ENCODE measurements at regions of chr5 and their contacts with region 1.

Region 1: DNA sequence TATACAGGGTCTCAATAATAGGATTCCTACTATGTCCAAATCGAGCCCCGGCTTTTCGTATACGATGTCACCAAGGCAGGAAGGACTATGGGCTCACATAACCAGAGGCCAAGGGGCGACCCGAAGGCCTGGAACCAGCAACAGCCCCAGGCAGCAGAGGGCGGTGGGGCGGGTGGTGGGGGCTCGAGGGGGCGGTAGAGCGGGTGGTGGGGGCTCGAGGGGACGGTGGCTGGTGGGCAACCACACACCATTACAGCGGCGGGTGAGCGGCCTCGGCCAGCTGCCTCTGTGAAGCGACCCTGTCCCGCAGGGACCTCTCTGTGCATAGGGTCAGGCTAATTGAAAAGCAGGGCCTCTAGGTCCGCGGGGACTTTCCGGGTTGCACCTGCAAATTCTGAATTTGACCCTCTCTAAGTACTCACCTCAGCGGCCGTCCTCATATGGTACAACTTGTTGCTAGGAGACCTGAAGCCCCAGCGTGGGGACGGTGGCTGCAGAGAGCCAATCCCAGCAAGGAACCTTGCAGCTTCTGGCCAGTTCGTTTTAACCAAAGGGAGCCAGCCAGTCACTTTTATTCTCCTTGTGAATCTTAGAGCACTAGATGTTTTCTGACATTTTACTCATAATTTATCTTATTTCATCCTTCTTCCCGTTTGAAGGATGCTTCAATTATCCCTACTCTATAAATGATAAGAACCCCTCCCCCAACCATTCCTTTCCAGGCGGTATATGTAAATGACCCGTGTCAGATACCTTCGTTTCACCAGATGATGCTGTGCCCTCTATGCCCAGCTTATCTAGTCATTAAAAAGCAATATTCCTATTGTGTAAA is at the start of gene NME5:
- DNase-seq: peak; percentile 72 to 91 (median 76)
- ATAC-seq: peak; percentile 98 to 100 (median 99)
- H3K4me3 ChIP-seq: peak within 1 kb of the TSS; percentile 48 to 67 (median 57)
- H3K27ac ChIP-seq: no peak within 1 kb of the TSS
- H3K4me1 ChIP-seq: peaks cover 0 to 7% (median 0%) of the 10 kb centered on the region in 3 donors
- H3K27me3 ChIP-seq: no peaks in the 10 kb centered on the region
- CTCF ChIP-seq: no peak
- total RNA-seq, gene NME5: 1.8 to 4.3 (median 2.5) TPM

Region 2: DNA sequence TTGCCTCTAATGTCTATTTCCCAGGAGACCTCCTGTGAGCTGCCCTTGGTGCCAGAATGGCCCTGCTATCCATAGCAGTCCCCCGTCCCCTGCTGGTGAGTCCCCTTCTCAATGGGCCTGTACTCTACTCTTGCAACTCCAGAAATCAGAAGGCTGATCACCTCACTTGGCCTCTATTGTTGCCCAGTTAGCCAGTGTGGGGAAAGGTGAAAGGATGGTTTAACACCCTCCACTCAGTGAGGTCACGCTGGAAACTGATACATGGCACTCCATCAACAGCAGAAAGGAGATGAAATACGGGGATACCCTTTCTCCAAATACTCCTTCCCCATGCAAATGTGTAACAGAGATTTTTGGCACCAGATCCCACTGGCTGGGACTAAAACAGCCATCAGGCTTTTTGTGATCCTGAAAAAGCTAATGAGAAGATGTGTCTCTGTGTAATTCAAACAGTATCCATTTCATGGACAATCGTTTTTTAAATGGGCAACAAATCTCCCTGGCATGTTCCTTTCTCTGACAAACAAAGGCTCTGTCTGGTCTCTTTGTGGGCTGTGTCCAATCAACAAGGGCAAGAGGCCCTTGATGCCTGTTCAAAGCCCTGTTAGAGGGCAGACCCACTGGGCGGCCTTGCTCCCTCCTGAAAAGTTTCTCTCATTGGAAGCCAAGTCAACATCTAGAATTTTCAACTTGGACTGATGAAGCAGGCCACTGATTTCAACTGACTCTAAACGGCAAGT is 983.7 kb before region 1 on chr5:
- intact Hi-C with region 1: no loop called
- DNase-seq: no peak
- ATAC-seq: no peak
- H3K4me3 ChIP-seq: no peak overlapping the region
- H3K27ac ChIP-seq: no peak overlapping the region
- H3K4me1 ChIP-seq: no peaks in the 10 kb centered on the region
- H3K27me3 ChIP-seq: no peaks in the 10 kb centered on the region
- CTCF ChIP-seq: no peak

Region 3: GRCh38 chr5:138077065-138077696 is 62.0 kb before region 1 on chr5:
- intact Hi-C with region 1: loop called in 2 of 3 experiments (anchors 10 kb)
- DNase-seq: peak in 5 of 6 donors; percentile 22 to 69 (median 43)
- ATAC-seq: peak; percentile 66 to 91 (median 90)
- H3K4me3 ChIP-seq: no peak overlapping the region
- H3K27ac ChIP-seq: no peak overlapping the region
- H3K4me1 ChIP-seq: no peaks in the 10 kb centered on the region
- H3K27me3 ChIP-seq: no peaks in the 10 kb centered on the region
- CTCF ChIP-seq: peak; percentile 48 to 80 (median 68)

Measured in pancreas (tissue), 10 donors.